BJ (cell line): ENCODE measurements at regions of chr1 and their contacts with region 1.

Region 1: DNA sequence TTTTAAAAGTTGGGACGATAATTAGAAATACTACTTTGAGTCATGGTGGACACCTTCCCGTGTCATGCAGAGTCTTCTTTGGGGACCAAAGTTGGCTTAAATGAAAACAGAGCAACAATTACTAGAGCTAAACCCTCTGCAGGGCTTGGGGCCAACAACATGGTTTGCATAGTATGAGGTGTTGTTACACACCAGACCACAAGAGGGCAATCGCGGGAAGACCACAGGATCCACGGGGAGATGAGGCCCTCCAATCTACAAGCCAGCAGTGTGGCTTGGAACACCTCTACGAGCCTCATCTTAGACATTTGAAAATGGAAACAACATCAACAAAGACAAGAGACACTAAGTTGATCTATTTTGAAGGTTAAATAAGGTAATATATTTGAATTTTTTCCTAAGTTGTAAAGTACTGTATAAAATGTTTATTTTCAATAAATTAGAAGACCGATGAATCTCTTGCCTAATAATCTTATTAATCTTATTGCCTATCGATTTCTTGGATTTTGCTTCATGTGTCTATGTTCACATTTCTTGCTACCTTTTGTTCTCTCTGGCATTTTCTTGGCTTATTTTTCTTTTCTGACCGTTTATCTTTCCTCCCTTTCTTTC is 8.2 kb upstream of the SMCP start:
- DNase-seq: no peak
- H3K4me3 ChIP-seq: no peak overlapping the region
- H3K27me3 ChIP-seq: peaks cover 2% of the 10 kb centered on the region; the same call in 1 of the 2 replicates
- CTCF ChIP-seq: peak; percentile 87

Region 2: DNA sequence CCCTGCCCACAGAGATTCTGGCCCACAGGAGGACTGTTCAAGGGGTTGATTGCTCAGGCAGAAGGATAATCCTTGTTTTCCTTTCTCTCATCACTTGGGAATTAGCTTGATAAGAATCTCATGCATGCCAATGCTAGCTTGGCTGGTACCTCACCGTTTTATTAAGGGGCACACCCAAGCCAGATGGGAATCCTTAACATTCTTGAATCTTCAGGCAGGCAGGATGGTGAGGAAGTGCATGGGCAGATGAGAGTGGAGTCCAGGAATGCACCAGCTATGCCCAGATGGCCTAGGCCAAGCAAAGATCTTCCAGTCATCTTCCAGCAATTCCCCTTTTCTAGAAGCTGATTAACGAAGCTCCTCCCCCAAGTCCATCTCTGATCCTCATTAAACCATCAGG is 14.3 kb before region 1 on chr1:
- CTCF ChIA-PET with region 1: interaction called, 39 read pairs
- POLR2A ChIA-PET with region 1: no interaction called
- DNase-seq: no peak
- H3K4me3 ChIP-seq: no peak overlapping the region
- H3K27me3 ChIP-seq: no peaks in the 10 kb centered on the region
- CTCF ChIP-seq: no peak

Region 3: DNA sequence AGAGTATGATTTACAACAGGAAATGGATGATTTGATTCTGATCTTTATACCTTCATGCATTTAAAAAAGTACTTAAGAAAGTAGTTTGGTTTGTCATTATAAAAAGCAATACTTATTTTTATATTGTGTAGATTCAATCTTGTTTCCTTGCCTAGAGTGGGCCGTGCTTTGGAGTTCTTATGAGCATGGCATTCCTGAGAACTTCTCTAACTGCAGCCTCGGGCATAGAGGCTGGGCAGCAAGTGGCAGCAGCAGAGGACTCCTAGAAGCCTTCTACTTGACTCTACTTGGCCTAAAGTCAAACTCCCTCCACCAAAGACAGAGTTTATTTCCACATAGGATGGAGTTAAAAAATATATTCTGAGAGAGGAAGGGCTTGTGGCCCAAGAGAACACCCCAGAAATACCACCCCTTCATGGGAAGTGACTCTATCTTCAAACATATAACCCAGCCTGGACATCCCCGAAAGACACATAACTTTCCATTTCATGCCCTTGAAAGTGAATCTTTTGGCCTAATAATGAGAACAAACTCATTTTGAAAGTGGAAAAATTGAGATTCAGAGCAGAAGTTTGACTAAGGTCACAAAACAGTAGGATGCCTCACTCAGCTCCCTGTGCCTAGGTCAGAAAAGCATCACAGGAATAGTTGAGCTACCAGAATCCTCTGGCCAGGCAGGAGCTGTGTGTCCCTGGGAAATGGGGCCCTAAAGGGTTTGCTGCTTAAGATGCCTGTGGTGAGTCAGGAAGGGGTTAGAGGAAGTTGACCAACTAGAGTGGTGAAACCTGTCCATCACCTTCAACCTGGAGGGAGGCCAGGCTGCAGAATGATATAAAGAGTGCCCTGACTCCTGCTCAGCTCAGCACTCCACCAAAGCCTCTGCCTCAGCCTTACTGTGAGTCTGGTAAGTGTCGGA is 38.0 kb after region 1 on chr1 and contains the start of gene IVL:
- CTCF ChIA-PET with region 1: interaction called, 11 read pairs
- POLR2A ChIA-PET with region 1: no interaction called
- DNase-seq: no peak
- H3K4me3 ChIP-seq: no peak within 1 kb of the TSS
- H3K27me3 ChIP-seq: peaks cover 6% of the 10 kb centered on the region; the same call in 1 of the 2 replicates
- CTCF ChIP-seq: no peak
- polyA plus RNA-seq, gene IVL: 0.05 TPM in 1 of 2 replicates, not detected in the other